ENCODE measurements at regions of chr5 and their contacts with region 1.

Region 1: DNA sequence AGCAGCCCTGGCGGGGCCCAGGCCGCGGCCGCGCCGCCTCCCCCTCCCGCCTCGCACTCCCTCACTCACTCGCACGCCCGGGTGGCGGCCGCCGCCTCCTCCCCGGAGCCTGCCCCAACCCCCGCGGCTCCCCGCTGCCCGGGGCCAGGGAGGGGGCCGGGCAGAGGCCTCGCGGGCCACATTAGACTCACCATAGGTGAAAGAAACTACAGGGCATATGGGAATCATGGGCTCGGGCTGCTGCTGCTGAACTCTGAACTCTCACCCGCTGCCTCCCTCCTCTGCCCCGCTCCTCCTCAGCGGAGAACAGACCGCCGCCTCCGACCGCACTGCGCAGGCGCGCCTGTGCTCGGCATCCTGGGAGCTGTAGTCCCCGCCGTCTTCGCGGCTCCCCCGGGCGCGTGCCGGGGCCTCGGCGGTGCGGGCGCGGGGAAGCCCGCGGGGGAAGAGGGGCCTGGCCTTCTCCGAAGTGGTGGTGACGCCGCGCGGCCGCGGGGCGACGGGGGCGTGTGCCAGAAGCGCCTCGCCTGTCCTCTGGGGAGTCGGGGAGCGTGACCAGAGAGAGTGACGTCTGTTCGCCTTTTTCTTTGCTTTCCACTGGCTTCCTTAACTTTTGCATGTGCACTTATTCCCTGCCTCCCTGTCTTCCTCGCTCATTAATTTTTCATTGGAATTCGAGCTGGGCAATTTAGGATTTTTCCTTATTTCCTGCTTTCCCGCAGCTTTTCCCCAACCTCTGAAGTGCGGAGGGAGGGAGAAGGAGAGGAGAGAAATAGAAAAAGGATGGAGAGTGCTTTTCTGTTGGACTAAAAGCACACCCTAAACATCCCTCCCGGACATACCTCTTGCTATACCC is at the start of gene ZFR:
- DNase-seq: peak; percentile 96
- H3K4me3 Mint-ChIP-seq: peak within 1 kb of the TSS; percentile 92
- H3K27ac Mint-ChIP-seq: peak within 1 kb of the TSS; percentile 98
- H3K4me1 Mint-ChIP-seq: peaks cover 38% of the 10 kb centered on the region
- H3K27me3 Mint-ChIP-seq: no peaks in the 10 kb centered on the region
- total RNA-seq, gene ZFR: 58.1 to 61.1 TPM

Region 2: GRCh38 chr5:32283539-32284377 is 160.9 kb before region 1 on chr5:
- CTCF ChIA-PET with region 1: no interaction called
- POLR2A ChIA-PET with region 1: no interaction called
- intact Hi-C with region 1: loop called (anchors 1 kb)
- DNase-seq: peak; percentile 42
- H3K4me3 Mint-ChIP-seq: no peak overlapping the region
- H3K27ac Mint-ChIP-seq: peak overlapping the region; percentile 38
- H3K4me1 Mint-ChIP-seq: peaks cover 43% of the 10 kb centered on the region
- H3K27me3 Mint-ChIP-seq: no peaks in the 10 kb centered on the region

Region 3: GRCh38 chr5:32388432-32389129 is 56.1 kb before region 1 on chr5:
- CTCF ChIA-PET with region 1: no interaction called
- POLR2A ChIA-PET with region 1: interaction called, 5 read pairs
- intact Hi-C with region 1: loop called (anchors 1 kb)
- DNase-seq: no peak
- H3K4me3 Mint-ChIP-seq: no peak overlapping the region
- H3K27ac Mint-ChIP-seq: peak overlapping the region; percentile 87
- H3K4me1 Mint-ChIP-seq: peaks cover 17% of the 10 kb centered on the region
- H3K27me3 Mint-ChIP-seq: no peaks in the 10 kb centered on the region

Region 4: DNA sequence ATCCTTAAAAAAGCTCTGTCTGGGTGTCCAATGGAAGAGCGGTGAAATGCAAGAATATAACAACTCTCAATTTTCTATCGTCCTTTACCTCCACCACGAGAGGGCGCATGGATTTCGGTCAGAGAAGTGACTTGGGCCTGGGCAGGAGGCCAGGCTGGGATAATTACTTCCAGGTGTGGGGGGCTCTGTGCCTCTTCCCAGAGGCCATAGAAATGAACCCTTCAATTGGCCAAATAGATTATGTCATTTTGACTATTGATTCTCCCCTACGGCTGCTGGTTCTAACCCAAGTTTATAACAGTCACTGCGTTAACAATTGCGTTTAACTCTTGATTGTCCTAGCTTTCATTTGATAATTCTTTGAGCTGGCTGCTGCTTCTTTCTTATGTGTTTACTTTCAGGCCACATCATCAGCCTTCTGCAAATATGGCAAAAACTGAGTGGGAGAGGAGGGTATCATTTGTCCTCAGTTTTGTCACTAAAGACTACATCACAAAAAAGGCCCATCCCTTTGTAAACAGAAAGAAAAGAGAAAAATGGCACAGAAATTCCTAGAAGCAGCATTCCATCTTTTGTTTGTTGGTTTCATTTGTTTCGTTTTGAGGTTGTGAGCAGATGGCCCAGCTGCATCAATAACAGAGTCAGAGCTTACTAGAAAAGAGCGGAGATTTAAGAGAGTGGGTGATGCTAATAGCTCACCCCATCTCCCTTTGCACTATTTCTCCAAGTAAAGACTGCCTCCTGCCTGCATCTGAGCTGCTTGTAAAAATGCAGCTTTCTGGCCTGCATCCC is 45.3 kb after region 1 on chr5:
- CTCF ChIA-PET with region 1: interaction called, 4 read pairs
- POLR2A ChIA-PET with region 1: interaction called, 3 read pairs
- intact Hi-C with region 1: loop called (anchors 2 kb)
- DNase-seq: peak; percentile 77
- H3K4me3 Mint-ChIP-seq: no peak overlapping the region
- H3K27ac Mint-ChIP-seq: no peak overlapping the region
- H3K4me1 Mint-ChIP-seq: no peaks in the 10 kb centered on the region
- H3K27me3 Mint-ChIP-seq: no peaks in the 10 kb centered on the region

Region 5: DNA sequence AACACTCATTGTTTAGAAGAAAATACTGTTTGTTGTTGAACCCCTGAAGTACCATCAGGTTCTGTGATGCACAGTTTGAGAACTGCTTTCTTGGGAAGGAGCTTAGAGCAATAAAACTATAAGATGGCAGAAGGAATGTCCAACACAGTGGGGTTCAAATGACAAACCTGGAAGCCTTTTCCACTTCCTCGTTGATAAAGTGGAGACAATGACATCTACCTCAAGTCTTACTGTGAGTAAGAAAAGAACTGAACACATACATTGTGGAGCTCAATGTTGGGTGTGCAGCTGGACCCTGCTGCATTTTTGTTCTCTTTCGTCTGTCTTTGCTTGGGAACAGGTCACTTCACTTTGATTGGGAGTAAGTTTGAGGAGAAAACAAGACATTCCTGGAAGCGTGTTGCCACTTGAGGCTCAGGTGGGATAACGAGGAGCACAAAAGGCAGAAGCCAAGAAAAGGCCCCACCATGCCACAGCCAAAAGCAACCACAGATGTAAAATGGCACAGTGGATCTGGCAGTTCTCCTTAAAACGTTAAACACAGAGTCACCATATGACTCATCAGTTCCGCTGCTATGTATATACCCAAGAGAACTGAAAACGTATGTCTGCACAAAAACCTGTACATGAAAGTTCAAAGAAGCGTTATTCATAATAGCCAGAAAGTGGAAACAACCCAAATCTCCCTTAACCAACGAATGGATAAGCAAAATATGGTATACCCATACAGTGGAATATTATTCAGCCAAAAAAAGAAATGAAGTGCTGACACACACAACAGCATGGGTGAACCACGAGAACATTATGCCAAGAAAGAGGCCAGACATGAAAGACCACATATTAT is 97.8 kb after region 1 on chr5:
- CTCF ChIA-PET with region 1: no interaction called
- POLR2A ChIA-PET with region 1: no interaction called
- intact Hi-C with region 1: loop called (anchors 1 kb)
- DNase-seq: peak; percentile 65
- H3K4me3 Mint-ChIP-seq: peak overlapping the region; percentile 36
- H3K27ac Mint-ChIP-seq: peak overlapping the region; percentile 94
- H3K4me1 Mint-ChIP-seq: peaks cover 57% of the 10 kb centered on the region
- H3K27me3 Mint-ChIP-seq: no peaks in the 10 kb centered on the region

Measured in activated CD4-positive, alpha-beta memory T cell treated with anti-CD3 and anti-CD28 coated beads for 36 hours (primary cell).